ENCODE measurements at regions of chr6 and their contacts with region 1.

Region 1: DNA sequence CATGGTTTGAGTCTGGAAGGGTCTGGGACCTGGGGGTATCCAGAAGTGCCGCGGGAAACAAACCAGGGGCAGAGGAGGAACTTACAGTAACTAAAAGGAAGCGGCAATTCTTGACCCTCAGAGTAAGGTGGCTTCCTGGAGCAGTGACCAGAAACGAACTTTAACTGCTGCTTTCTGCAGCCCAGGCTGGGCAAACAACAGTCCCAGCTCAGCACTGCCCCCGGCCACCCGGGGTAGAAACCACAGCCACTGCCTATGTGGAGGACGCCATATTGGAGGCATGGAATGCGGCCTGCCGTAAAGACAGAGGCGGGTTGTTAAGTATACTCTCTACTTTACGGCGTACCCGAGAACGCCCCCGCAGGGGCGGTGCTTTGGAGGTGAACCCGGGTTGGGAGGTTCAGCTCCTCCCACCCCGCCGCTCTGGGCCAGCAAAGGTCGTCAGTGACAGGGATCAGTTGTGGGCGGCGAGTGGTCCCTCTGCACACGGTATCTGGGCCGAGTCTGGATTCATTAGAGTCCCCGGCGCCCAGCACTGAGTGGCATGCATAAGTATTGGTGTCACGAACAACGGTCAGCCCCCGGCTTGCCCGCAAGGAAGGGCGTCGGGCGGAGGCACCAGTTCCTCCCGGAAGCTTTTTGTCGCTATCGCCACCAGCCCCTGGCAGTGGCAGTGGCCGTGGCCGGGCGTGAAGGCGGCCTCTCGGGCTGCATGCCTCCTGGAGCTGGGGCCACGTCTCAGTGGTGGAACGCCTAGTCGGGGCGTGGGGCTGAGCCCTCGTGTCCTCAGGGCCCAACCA is at the start of gene PDSS2:
- DNase-seq: peak; percentile 99
- H3K4me3 ChIP-seq: peak within 1 kb of the TSS; percentile 86
- H3K27ac ChIP-seq: peak within 1 kb of the TSS; percentile 90
- H3K4me1 ChIP-seq: peaks cover 19% of the 10 kb centered on the region
- CTCF ChIP-seq: peak; percentile 77
- total RNA-seq, gene PDSS2: 7.4 and 14.7 TPM in 2 replicates

Region 2: DNA sequence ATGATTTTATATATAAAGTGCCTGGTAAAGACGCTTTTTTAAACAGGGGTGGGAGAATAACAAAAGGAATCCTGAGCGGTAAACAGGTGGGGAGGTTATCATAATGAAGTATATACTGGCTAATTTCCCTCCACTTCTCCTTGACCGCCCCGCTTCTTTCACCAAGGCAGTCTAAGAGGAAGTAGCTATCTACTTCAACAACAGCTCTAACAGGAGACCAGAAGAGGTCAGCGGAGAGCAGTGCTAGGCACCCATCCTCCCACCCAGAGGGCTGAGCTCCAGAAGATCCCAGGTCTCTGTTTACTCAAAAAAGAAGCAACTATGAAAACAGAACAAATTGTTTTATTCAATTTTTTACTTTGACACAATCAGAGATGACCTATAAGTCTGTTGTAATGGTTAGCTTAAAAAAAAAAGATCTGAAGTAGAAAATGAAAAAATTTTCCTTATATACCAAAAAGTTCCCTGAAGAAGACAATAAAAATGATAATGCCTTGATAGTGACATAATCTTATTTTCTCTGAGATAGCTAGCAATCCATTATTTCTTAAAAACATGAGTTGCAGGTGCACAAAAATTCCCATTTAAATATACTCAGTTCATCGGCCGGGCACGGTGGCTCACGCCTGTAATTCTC is 141.3 kb before region 1 on chr6:
- CTCF ChIA-PET with region 1: interaction called, 4 read pairs
- POLR2A ChIA-PET with region 1: interaction called, 4 read pairs
- intact Hi-C with region 1: loop called (anchors 1 kb)
- DNase-seq: peak; percentile 80
- H3K4me3 ChIP-seq: no peak overlapping the region
- H3K27ac ChIP-seq: no peak overlapping the region
- H3K4me1 ChIP-seq: peaks cover 33% of the 10 kb centered on the region
- CTCF ChIP-seq: peak; percentile 98

Region 3: DNA sequence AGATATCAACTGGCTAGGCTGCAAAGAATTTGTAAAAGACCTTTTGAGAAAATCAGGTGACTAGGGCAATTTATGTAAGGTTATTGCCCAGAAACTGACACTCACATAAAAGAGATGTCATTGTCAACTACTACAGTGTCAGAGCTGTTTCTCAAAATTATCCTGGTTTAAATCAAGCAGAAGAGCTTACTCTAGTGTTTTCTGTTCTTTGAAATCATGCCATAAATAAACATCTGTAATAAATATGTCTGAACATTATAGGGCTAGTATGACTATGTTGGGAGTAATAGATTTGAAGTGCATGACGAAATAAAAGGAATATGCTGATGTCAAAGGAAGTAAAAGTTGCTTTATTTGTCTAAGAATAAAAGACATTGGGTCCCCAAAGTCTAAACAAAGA is 10.9 kb after region 1 on chr6:
- CTCF ChIA-PET with region 1: no interaction called
- POLR2A ChIA-PET with region 1: interaction called, 13 read pairs
- intact Hi-C with region 1: no loop called
- DNase-seq: no peak
- H3K4me3 ChIP-seq: no peak overlapping the region
- H3K27ac ChIP-seq: no peak overlapping the region
- H3K4me1 ChIP-seq: peaks cover 16% of the 10 kb centered on the region
- CTCF ChIP-seq: no peak

Region 4: GRCh38 chr6:107539409-107539808 is 79.9 kb after region 1 on chr6:
- CTCF ChIA-PET with region 1: no interaction called
- POLR2A ChIA-PET with region 1: interaction called, 7 read pairs
- intact Hi-C with region 1: loop called (anchors 2 kb)
- DNase-seq: no peak
- H3K4me3 ChIP-seq: no peak overlapping the region
- H3K27ac ChIP-seq: peak overlapping the region; percentile 98
- H3K4me1 ChIP-seq: peaks cover 62% of the 10 kb centered on the region
- CTCF ChIP-seq: no peak